ENCODE measurements at regions of chr15 and their contacts with region 1.

Region 1: GRCh38 chr15:36479200-36479896 is 100.1 kb upstream of the CDIN1 start:
- DNase-seq: no peak
- H3K4me3 ChIP-seq: no peak overlapping the region
- CTCF ChIP-seq: no peak

Region 2: GRCh38 chr15:34818526-34818925 is 1660.8 kb before region 1 on chr15:
- in situ Hi-C with region 1: no loop called
- DNase-seq: no peak
- H3K4me3 ChIP-seq: no peak overlapping the region
- CTCF ChIP-seq: no peak

Region 3: DNA sequence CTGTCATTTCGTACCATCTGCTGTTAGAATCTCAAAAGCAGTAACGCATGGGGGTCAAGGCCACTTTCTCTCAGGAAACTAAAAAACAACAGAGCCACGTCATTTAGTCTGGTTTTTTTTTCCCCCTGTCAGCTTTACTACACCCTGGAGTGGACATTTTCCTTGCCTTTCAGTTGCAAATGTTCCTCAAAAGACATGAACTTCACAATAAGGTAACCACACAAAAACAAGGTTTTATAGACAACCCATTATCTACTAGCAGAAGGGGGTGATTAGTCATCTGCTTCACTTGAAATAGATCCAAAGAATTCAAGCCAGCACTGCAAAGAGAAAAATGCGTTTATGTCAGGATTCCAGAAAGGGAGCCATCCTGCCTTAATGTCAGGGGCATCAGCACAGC is 71.7 kb before region 1 on chr15:
- in situ Hi-C with region 1: no loop called
- DNase-seq: peak; percentile 67
- H3K4me3 ChIP-seq: no peak overlapping the region
- CTCF ChIP-seq: no peak

Region 4: GRCh38 chr15:36438499-36438898 is 40.8 kb before region 1 on chr15:
- in situ Hi-C with region 1: loop called (anchors 5 kb)
- DNase-seq: no peak
- H3K4me3 ChIP-seq: no peak overlapping the region
- CTCF ChIP-seq: no peak

Measured in astrocyte of the cerebellum (primary cell).